ENCODE measurements at regions of chr19 and their contacts with region 1.

Region 1: GRCh38 chr19:48333467-48334384 is 8.4 kb downstream of the EMP3 start:
- DNase-seq: peak; percentile 94
- ATAC-seq: peak; percentile 62
- H3K4me3 ChIP-seq: peak overlapping the region; percentile 59 to 94 (median 90)
- H3K4me3 Mint-ChIP-seq: peak overlapping the region; percentile 98
- H3K27ac ChIP-seq: peak overlapping the region; percentile 82 to 94
- H3K27ac Mint-ChIP-seq: peak overlapping the region; percentile 95
- H3K4me1 ChIP-seq: peaks cover 42 to 54% of the 10 kb centered on the region in 2 donors
- H3K4me1 Mint-ChIP-seq: peaks cover 49% of the 10 kb centered on the region
- H3K27me3 ChIP-seq: no peaks in the 10 kb centered on the region
- H3K27me3 Mint-ChIP-seq: no peaks in the 10 kb centered on the region
- CTCF ChIP-seq: peak; percentile 83

Region 2: GRCh38 chr19:46600384-46601317 is 1733.1 kb before region 1 on chr19:
- CTCF ChIA-PET with region 1: no interaction called
- POLR2A ChIA-PET with region 1: no interaction called
- intact Hi-C with region 1: loop called (anchors 5 kb)
- DNase-seq: peak; percentile 100
- ATAC-seq: peak; percentile 89
- H3K4me3 ChIP-seq: peak overlapping the region; percentile 64 to 100 (median 99)
- H3K4me3 Mint-ChIP-seq: peak overlapping the region; percentile 100
- H3K27ac ChIP-seq: peak overlapping the region; percentile 98 to 100
- H3K27ac Mint-ChIP-seq: peak overlapping the region; percentile 100
- H3K4me1 ChIP-seq: peaks cover 19 to 30% of the 10 kb centered on the region in 2 donors
- H3K4me1 Mint-ChIP-seq: peaks cover 31% of the 10 kb centered on the region
- H3K27me3 ChIP-seq: no peaks in the 10 kb centered on the region
- H3K27me3 Mint-ChIP-seq: no peaks in the 10 kb centered on the region
- CTCF ChIP-seq: no peak

Region 3: DNA sequence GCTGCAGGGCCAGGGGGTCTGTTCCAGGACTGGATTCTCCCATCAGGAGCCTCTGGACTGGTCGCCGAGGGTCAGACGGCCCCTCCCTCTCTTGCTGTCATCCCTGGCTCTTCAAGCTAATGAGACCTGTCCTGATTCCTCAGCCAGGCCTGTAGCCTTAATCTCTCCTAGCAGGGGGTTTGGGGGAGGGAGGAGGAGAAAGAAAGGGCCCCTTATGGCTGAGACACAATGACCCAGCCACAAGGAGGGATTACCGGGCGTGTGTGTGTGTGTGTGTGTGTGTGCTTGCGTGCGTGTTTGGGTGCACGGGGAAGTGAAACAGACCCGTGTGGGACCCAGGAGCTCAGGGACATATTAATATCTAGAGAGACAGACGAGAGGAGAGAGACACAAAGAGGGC is 513.9 kb before region 1 on chr19:
- CTCF ChIA-PET with region 1: no interaction called
- POLR2A ChIA-PET with region 1: no interaction called
- intact Hi-C with region 1: no loop called
- DNase-seq: peak; percentile 44
- ATAC-seq: no peak
- H3K4me3 ChIP-seq: no peak overlapping the region
- H3K4me3 Mint-ChIP-seq: no peak overlapping the region
- H3K27ac ChIP-seq: no peak overlapping the region
- H3K27ac Mint-ChIP-seq: no peak overlapping the region
- H3K4me1 ChIP-seq: peaks cover 8 to 10% of the 10 kb centered on the region in 2 donors
- H3K4me1 Mint-ChIP-seq: peaks cover 4% of the 10 kb centered on the region
- H3K27me3 ChIP-seq: peaks cover 0 to 26% (median 4%) of the 10 kb centered on the region in 4 experiments
- H3K27me3 Mint-ChIP-seq: peaks cover 43% of the 10 kb centered on the region
- CTCF ChIP-seq: no peak

Region 4: DNA sequence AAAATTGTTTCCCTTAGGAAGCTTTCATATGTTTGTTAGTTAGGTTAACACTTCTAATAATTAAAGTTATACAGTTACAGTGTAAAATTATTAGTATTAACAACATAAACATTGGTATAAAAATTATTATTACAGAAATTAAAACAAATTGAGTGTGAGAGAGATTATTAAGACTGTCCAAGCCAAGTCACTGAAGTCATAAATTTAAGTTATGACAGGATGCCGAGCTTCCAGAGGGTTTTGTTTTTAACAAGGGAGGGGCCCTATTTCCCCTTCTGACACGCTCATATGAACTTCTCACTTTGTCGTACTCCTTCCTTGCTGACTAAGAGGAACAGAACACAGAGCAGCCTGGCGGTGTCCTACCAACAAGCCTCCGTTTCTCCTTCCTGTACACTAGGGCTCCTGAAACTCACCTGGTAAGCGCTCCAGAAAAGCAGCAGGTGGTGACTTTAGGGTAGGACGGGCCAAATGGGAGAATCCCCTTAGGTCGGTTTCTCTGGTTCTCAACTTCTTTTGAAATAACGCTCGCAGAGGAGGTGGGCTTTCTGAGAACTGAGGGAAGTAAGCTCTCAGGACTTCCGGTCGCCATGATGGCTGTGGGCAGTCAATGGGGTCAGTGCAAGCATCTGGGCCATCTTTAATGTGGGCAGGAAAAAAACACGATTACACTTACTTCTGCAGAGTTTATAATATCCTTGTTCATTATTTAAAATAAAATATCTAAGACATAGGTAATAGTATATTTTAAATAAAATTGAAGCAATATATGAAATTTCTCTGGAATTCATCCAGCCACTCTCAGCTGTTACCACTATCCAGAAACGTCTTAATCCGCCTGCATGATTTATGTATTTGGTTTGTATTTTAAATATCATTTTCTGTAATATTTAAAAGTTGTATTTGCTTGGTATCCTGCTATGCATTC is 78.1 kb before region 1 on chr19 and contains the start of gene CARD8:
- CTCF ChIA-PET with region 1: interaction called, 28 read pairs
- POLR2A ChIA-PET with region 1: interaction called, 4 read pairs
- intact Hi-C with region 1: no loop called
- DNase-seq: peak; percentile 94
- ATAC-seq: peak; percentile 81
- H3K4me3 ChIP-seq: peak within 1 kb of the TSS; percentile 75 to 99 (median 96)
- H3K4me3 Mint-ChIP-seq: peak within 1 kb of the TSS; percentile 100
- H3K27ac ChIP-seq: peak within 1 kb of the TSS; percentile 92 to 93
- H3K27ac Mint-ChIP-seq: peak within 1 kb of the TSS; percentile 99
- H3K4me1 ChIP-seq: peaks cover 37 to 49% of the 10 kb centered on the region in 2 donors
- H3K4me1 Mint-ChIP-seq: peaks cover 61% of the 10 kb centered on the region
- H3K27me3 ChIP-seq: no peaks in the 10 kb centered on the region
- H3K27me3 Mint-ChIP-seq: no peaks in the 10 kb centered on the region
- CTCF ChIP-seq: no peak
- total RNA-seq, gene CARD8: 161 and 164 TPM in 2 replicates

Region 5: DNA sequence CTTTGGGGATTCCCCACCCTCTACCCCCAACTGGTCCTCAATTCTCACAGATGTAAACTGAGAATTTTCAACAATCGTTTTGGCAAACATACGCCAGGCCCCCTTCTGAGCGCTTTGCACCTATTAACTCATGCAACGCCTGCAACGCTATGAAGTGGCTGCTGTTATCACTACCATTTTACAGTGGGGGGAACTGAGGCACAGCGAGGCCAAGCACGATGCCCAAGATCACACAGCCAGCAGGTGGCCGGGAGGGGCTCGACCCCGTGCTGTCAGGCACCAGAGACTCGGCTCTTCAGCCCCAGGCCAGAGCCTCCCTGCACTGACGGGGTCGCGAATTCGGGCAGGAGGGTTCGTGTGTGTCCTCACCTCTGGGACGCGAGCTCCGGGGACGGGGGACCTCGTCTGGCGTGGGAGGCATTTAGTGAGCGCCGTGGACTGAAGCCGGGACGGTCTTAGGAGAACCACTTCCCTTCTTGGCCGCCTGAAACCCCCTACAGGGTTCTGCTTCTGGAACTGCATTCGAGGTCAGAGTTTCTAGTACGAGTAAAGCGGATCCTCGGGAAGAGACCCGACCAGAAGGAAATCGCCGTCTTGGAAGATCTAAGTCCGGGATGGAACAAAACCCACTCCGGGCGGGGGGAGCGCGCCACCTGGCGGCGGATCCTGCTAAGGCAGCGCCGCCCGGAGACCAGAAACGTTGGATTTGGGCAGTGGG is 42.8 kb before region 1 on chr19:
- CTCF ChIA-PET with region 1: interaction called, 7 read pairs
- POLR2A ChIA-PET with region 1: no interaction called
- intact Hi-C with region 1: loop called (anchors 1 kb)
- DNase-seq: peak; percentile 73
- ATAC-seq: peak; percentile 77
- H3K4me3 ChIP-seq: peak overlapping the region; percentile 0 to 71 (median 56)
- H3K4me3 Mint-ChIP-seq: peak overlapping the region; percentile 85
- H3K27ac ChIP-seq: no peak overlapping the region
- H3K27ac Mint-ChIP-seq: no peak overlapping the region
- H3K4me1 ChIP-seq: peaks cover 4 to 13% of the 10 kb centered on the region in 2 donors
- H3K4me1 Mint-ChIP-seq: peaks cover 10% of the 10 kb centered on the region
- H3K27me3 ChIP-seq: no peaks in the 10 kb centered on the region
- H3K27me3 Mint-ChIP-seq: no peaks in the 10 kb centered on the region
- CTCF ChIP-seq: peak; percentile 90

Region 6: GRCh38 chr19:48391107-48391986 is 57.6 kb after region 1 on chr19 and contains the start of gene KDELR1:
- CTCF ChIA-PET with region 1: interaction called, 13 read pairs
- POLR2A ChIA-PET with region 1: interaction called, 4 read pairs
- intact Hi-C with region 1: loop called (anchors 1 kb)
- DNase-seq: peak; percentile 86
- ATAC-seq: peak; percentile 88
- H3K4me3 ChIP-seq: peak within 1 kb of the TSS; percentile 71 to 93 (median 85)
- H3K4me3 Mint-ChIP-seq: peak within 1 kb of the TSS; percentile 95
- H3K27ac ChIP-seq: peak within 1 kb of the TSS; percentile 79 to 80
- H3K27ac Mint-ChIP-seq: peak within 1 kb of the TSS; percentile 92
- H3K4me1 ChIP-seq: peaks cover 39 to 45% of the 10 kb centered on the region in 2 donors
- H3K4me1 Mint-ChIP-seq: peaks cover 24% of the 10 kb centered on the region
- H3K27me3 ChIP-seq: peaks cover 0 to 39% (median 23%) of the 10 kb centered on the region in 4 experiments
- H3K27me3 Mint-ChIP-seq: peaks cover 25% of the 10 kb centered on the region
- CTCF ChIP-seq: peak; percentile 88
- total RNA-seq, gene KDELR1: 60.5 and 62.7 TPM in 2 replicates

Region 7: DNA sequence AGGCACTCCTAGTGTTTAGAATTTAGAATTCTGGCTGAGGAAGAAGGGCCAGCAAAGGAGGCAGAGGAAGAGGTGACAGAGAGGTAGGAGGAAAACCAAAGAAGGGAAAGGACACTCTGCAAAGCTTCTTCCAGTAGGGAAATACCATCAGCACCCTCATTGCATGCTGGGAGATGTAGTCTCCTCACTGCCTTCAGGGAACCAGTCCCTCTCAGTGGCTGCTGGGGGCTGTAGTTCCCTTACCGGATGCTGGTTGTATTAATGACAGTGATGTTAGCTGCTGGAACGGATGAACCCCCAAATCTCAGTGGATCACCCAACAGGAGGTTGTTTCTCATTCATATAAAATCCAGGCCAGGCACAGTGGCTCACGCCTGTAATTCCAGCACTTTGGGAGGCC is 69.9 kb after region 1 on chr19:
- CTCF ChIA-PET with region 1: no interaction called
- POLR2A ChIA-PET with region 1: no interaction called
- intact Hi-C with region 1: no loop called
- DNase-seq: peak; percentile 68
- ATAC-seq: peak; percentile 56
- H3K4me3 ChIP-seq: no peak overlapping the region
- H3K4me3 Mint-ChIP-seq: no peak overlapping the region
- H3K27ac ChIP-seq: no peak overlapping the region
- H3K27ac Mint-ChIP-seq: peak overlapping the region; percentile 43
- H3K4me1 ChIP-seq: peaks cover 0 to 4% of the 10 kb centered on the region in 2 donors
- H3K4me1 Mint-ChIP-seq: peaks cover 14% of the 10 kb centered on the region
- H3K27me3 ChIP-seq: peaks cover 0 to 15% (median 5%) of the 10 kb centered on the region in 4 experiments
- H3K27me3 Mint-ChIP-seq: peaks cover 18% of the 10 kb centered on the region
- CTCF ChIP-seq: no peak

Region 8: GRCh38 chr19:48468775-48469288 is 135.1 kb after region 1 on chr19:
- CTCF ChIA-PET with region 1: no interaction called
- POLR2A ChIA-PET with region 1: no interaction called
- intact Hi-C with region 1: loop called (anchors 1 kb)
- DNase-seq: peak; percentile 100
- ATAC-seq: peak; percentile 87
- H3K4me3 ChIP-seq: peak overlapping the region; percentile 8 to 90 (median 83)
- H3K4me3 Mint-ChIP-seq: peak overlapping the region; percentile 92
- H3K27ac ChIP-seq: peak overlapping the region; percentile 52 to 84
- H3K27ac Mint-ChIP-seq: peak overlapping the region; percentile 89
- H3K4me1 ChIP-seq: peaks cover 11 to 15% of the 10 kb centered on the region in 2 donors
- H3K4me1 Mint-ChIP-seq: peaks cover 17% of the 10 kb centered on the region
- H3K27me3 ChIP-seq: peaks cover 0 to 3% (median 0%) of the 10 kb centered on the region in 4 experiments
- H3K27me3 Mint-ChIP-seq: no peaks in the 10 kb centered on the region
- CTCF ChIP-seq: no peak

Region 9: GRCh38 chr19:48608798-48609263 is 275.1 kb after region 1 on chr19:
- CTCF ChIA-PET with region 1: interaction called, 15 read pairs
- POLR2A ChIA-PET with region 1: interaction called, 4 read pairs
- intact Hi-C with region 1: loop called (anchors 2 kb)
- DNase-seq: peak; percentile 87
- ATAC-seq: peak; percentile 97
- H3K4me3 ChIP-seq: peak overlapping the region in 1 of 5 experiments; percentile 25
- H3K4me3 Mint-ChIP-seq: peak overlapping the region; percentile 67
- H3K27ac ChIP-seq: peak overlapping the region in 1 of 2 donors; percentile 4
- H3K27ac Mint-ChIP-seq: peak overlapping the region; percentile 90
- H3K4me1 ChIP-seq: peaks cover 0 to 8% of the 10 kb centered on the region in 2 donors
- H3K4me1 Mint-ChIP-seq: peaks cover 6% of the 10 kb centered on the region
- H3K27me3 ChIP-seq: no peaks in the 10 kb centered on the region
- H3K27me3 Mint-ChIP-seq: no peaks in the 10 kb centered on the region
- CTCF ChIP-seq: peak; percentile 69

Measured in B cell (primary cell).